ENCODE measurements at regions of chr10 and their contacts with region 1.

Region 1: DNA sequence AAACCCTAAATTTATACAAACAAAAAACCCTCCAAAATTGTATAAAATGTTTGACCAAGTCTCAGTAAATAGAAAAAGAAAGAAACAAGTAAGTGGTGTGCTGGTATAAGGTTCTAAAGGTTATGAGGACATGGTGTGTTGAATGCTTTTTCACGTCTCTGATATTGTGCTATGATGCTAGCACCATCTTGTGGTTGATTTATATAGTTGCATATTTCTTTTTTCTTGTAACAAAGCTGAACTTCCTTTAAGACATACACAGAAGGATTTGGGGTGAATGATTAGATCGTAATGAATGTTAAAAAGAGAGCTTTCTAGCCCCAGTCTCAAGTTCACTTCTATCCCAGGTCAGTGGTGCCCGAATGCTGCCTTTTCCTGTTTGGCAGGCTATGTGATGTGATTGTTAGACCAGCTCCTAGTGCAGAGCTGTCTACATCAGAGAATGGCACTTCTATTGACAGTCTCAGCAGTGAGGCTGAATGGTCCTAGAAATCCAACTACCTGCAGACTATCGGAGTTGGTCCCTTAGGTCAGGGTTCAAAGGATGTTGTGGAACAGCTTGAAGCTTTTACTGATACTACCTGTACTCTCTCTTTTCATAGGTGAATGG is 25.0 kb downstream of the VTI1A start:
- DNase-seq: peak; percentile 72
- ATAC-seq: peak; percentile 81
- H3K4me3 ChIP-seq: no peak overlapping the region
- H3K27ac ChIP-seq: peak overlapping the region; percentile 32
- H3K4me1 ChIP-seq: peaks cover 30 to 42% of the 10 kb centered on the region in 2 experiments
- H3K27me3 ChIP-seq: no peaks in the 10 kb centered on the region
- CTCF ChIP-seq: peak; percentile 72 to 93 (median 84)
- POLR2A ChIP-seq: no peak
- RAD21 ChIP-seq: peak; percentile 96

Region 2: GRCh38 chr10:112140110-112140970 is 331.6 kb before region 1 on chr10:
- CTCF ChIA-PET with region 1: interaction called, 26 read pairs
- POLR2A ChIA-PET with region 1: no interaction called
- RAD21 ChIA-PET with region 1: interaction called in 1 of 2 experiments, 4 read pairs
- intact Hi-C with region 1: no loop called
- DNase-seq: peak; percentile 95
- ATAC-seq: peak; percentile 96
- H3K4me3 ChIP-seq: peak overlapping the region; percentile 11 to 13; a peak in 2 of 4 replicates
- H3K27ac ChIP-seq: no peak overlapping the region
- H3K4me1 ChIP-seq: peaks cover 2 to 15% of the 10 kb centered on the region in 2 experiments; a peak in 3 of 4 replicates
- H3K27me3 ChIP-seq: no peaks in the 10 kb centered on the region
- CTCF ChIP-seq: peak; percentile 99 to 100 (median 99)
- POLR2A ChIP-seq: no peak
- RAD21 ChIP-seq: peak; percentile 96

Region 3: DNA sequence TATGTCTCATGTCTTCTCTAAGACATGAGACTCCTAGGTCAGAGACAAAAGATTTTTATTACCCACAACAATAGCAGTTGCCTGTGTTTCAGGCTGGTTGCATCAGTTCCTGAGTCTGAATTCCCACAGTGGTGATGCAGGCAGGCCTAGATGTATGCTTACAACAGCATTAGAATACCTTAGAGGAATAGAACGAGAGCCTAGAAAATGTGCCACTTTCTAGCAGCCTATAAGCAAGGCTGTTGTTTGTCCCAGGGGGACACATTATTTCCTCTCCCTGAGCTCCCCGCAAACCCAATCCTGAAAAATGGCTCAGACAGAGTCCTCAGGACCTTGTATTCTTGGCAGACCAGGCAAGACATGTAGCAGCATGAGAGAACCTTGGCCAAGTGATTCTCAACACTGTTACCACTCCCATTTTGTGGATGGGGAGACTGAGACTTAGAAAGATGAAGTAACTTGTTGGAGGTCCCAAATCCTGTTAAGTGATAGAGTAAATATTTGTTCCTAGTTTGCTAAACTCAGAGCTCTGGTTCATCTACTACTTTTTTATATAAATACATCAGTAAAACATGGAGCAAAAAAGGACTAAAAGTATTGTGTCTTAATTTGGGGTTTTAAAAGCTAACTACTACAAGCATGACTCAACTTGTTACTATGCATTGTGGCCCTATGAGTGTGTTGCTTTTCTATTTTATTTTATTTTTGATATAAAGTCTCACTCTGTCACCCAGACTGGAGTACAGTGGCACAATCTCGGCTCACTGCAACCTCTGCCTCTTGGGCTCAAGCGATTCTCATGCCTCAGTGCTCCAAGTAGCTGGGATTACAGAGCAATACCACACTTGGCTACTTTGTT is 10.7 kb before region 1 on chr10:
- CTCF ChIA-PET with region 1: interaction called, 20 read pairs
- POLR2A ChIA-PET with region 1: no interaction called
- RAD21 ChIA-PET with region 1: no interaction called
- intact Hi-C with region 1: no loop called
- DNase-seq: peak; percentile 83
- ATAC-seq: 0 out of 2 replicates have a peak, but pooled peaks have one; percentile 33
- H3K4me3 ChIP-seq: no peak overlapping the region
- H3K27ac ChIP-seq: no peak overlapping the region
- H3K4me1 ChIP-seq: peaks cover 0 to 15% of the 10 kb centered on the region in 2 experiments; a peak in 2 of 4 replicates
- H3K27me3 ChIP-seq: no peaks in the 10 kb centered on the region
- CTCF ChIP-seq: no peak
- POLR2A ChIP-seq: no peak
- RAD21 ChIP-seq: no peak

Region 4: DNA sequence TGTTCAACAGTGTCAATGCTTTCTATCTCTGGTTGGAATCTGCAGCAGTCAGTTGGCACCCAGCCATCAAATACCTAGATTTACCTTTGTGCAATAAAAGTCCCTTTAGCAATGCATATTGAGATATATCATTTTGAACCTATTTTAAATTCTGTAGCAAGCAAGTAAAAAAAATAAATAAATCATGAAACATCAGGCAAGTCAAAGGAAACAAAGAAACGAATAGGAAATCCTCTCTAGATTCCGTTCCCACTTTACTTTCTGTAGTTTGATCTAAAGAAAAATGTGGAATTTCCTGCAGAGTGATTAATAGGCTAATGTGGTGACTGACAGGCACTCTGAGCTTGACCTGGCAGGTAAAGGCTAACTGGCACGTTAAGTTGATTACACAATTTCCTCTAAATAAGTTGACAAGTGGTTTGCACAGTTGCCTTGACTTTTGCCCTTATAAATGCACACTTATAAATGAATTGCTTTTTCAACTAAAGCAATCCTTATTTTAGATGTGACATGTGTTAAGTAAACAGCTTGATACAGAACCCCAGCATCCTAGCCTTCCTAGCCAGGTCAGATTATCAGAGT is 269.9 kb after region 1 on chr10:
- CTCF ChIA-PET with region 1: no interaction called
- POLR2A ChIA-PET with region 1: no interaction called
- RAD21 ChIA-PET with region 1: interaction called in 1 of 2 experiments, 3 read pairs
- intact Hi-C with region 1: loop called (anchors 10 kb)
- DNase-seq: peak; percentile 52
- ATAC-seq: peak; percentile 64
- H3K4me3 ChIP-seq: peak overlapping the region in 1 of 2 experiments; percentile 3; a peak in 1 of 4 replicates
- H3K27ac ChIP-seq: peak overlapping the region; percentile 56
- H3K4me1 ChIP-seq: peaks cover 38 to 58% of the 10 kb centered on the region in 2 experiments
- H3K27me3 ChIP-seq: no peaks in the 10 kb centered on the region
- CTCF ChIP-seq: no peak
- POLR2A ChIP-seq: no peak
- RAD21 ChIP-seq: 0 out of 2 replicates have a peak, but pooled peaks have one; percentile 30

Region 5: GRCh38 chr10:113385021-113385999 is 913.3 kb after region 1 on chr10:
- CTCF ChIA-PET with region 1: interaction called, 57 read pairs
- POLR2A ChIA-PET with region 1: no interaction called
- RAD21 ChIA-PET with region 1: interaction called in 1 of 2 experiments, 3 read pairs
- intact Hi-C with region 1: loop called (anchors 1 kb)
- DNase-seq: peak; percentile 85
- ATAC-seq: peak; percentile 99
- H3K4me3 ChIP-seq: no peak overlapping the region
- H3K27ac ChIP-seq: no peak overlapping the region
- H3K4me1 ChIP-seq: peaks cover 16 to 22% of the 10 kb centered on the region in 2 experiments
- H3K27me3 ChIP-seq: peaks cover 3% of the 10 kb centered on the region; the same call in 1 of the 2 replicates
- CTCF ChIP-seq: peak; percentile 91 to 98 (median 95)
- POLR2A ChIP-seq: no peak
- RAD21 ChIP-seq: peak; percentile 100

Region 6: GRCh38 chr10:113563306-113564088 is 1091.5 kb after region 1 on chr10:
- CTCF ChIA-PET with region 1: interaction called, 5 read pairs
- POLR2A ChIA-PET with region 1: no interaction called
- RAD21 ChIA-PET with region 1: no interaction called
- intact Hi-C with region 1: loop called (anchors 5 kb)
- DNase-seq: peak; percentile 52
- ATAC-seq: peak; percentile 97
- H3K4me3 ChIP-seq: peak overlapping the region; percentile 44 to 54
- H3K27ac ChIP-seq: no peak overlapping the region
- H3K4me1 ChIP-seq: peaks cover 5 to 6% of the 10 kb centered on the region in 2 experiments; a peak in 3 of 4 replicates
- H3K27me3 ChIP-seq: no peaks in the 10 kb centered on the region
- CTCF ChIP-seq: peak; percentile 89 to 100 (median 100)
- POLR2A ChIP-seq: no peak
- RAD21 ChIP-seq: peak; percentile 98

Measured in HCT116 (cell line).